Transverse colon (tissue), 4 donors: ENCODE measurements at regions of chr13 and their contacts with region 1.

Region 1: GRCh38 chr13:79775830-79776229 is 294.9 kb downstream of the NDFIP2 start:
- DNase-seq: peak; percentile 36
- H3K4me3 ChIP-seq: no peak overlapping the region
- H3K27ac ChIP-seq: peak overlapping the region in 3 of 4 donors; percentile 8 to 47 (median 24)
- H3K4me1 ChIP-seq: peaks cover 0 to 42% (median 4%) of the 10 kb centered on the region in 4 donors
- H3K27me3 ChIP-seq: no peaks in the 10 kb centered on the region
- CTCF ChIP-seq: peak; percentile 32 to 55 (median 51)
- EP300 ChIP-seq: no peak
- POLR2A ChIP-seq: no peak

Region 2: DNA sequence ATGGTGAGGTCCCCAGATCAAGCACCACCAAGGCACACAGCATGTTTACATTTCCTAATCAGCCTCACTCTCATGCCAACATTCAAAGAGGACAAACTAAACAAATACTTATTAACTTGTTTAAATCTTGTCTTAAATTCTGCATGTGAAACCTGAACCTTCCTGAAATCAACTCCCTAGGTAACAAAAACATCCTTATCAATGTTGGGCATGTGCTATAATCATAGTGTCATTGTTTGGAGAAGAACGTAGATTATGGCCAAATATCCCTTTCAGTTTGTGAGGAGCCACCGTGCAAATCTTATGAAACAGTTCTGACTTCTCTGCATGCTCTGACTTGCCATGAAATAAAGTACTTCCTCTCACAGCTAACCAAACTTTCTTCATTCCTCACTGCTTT is 171.1 kb before region 1 on chr13:
- in situ Hi-C with region 1: no loop called
- intact Hi-C with region 1: no loop called
- DNase-seq: no peak
- H3K4me3 ChIP-seq: no peak overlapping the region
- H3K27ac ChIP-seq: no peak overlapping the region
- H3K4me1 ChIP-seq: no peaks in the 10 kb centered on the region
- H3K27me3 ChIP-seq: no peaks in the 10 kb centered on the region
- CTCF ChIP-seq: no peak
- EP300 ChIP-seq: no peak
- POLR2A ChIP-seq: no peak

Region 3: GRCh38 chr13:79749984-79750551 is 25.8 kb before region 1 on chr13:
- in situ Hi-C with region 1: no loop called
- intact Hi-C with region 1: no loop called
- DNase-seq: peak; percentile 34
- H3K4me3 ChIP-seq: no peak overlapping the region
- H3K27ac ChIP-seq: peak overlapping the region in 3 of 4 donors; percentile 4 to 46 (median 19)
- H3K4me1 ChIP-seq: peaks cover 0 to 5% (median 0%) of the 10 kb centered on the region in 4 donors
- H3K27me3 ChIP-seq: no peaks in the 10 kb centered on the region
- CTCF ChIP-seq: no peak
- EP300 ChIP-seq: no peak
- POLR2A ChIP-seq: no peak

Region 4: DNA sequence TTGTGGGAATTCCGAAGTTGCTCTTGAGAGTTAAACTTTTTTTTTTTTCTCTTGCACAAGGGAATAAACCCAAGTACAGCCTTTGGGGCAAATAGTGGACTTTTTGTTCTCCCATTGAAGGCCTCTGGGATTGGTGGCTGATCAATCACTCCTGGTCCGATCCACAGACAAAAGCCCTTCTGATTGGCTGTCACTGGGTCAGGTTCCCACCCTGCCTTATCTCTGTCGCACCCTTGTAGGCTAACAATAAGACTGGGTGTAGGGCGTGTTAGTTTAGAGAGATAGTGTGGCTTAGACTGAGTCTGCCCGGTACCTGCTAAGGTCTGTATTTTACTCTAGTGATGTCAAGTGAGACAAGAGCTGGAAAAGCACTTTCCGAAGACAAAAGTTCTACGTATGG is 85.9 kb after region 1 on chr13:
- in situ Hi-C with region 1: no loop called
- intact Hi-C with region 1: no loop called
- DNase-seq: peak; percentile 39
- H3K4me3 ChIP-seq: no peak overlapping the region
- H3K27ac ChIP-seq: peak overlapping the region in 3 of 4 donors; percentile 1 to 61 (median 19)
- H3K4me1 ChIP-seq: peaks cover 0 to 7% (median 2%) of the 10 kb centered on the region in 4 donors
- H3K27me3 ChIP-seq: no peaks in the 10 kb centered on the region
- CTCF ChIP-seq: no peak
- EP300 ChIP-seq: no peak
- POLR2A ChIP-seq: no peak

Region 5: GRCh38 chr13:80342471-80343380 is 566.9 kb after region 1 on chr13:
- in situ Hi-C with region 1: loop called in 1 of 4 experiments (anchors 25 kb)
- intact Hi-C with region 1: no loop called
- DNase-seq: peak; percentile 87
- H3K4me3 ChIP-seq: peak overlapping the region; percentile 21 to 94 (median 70)
- H3K27ac ChIP-seq: peak overlapping the region; percentile 95 to 98 (median 96)
- H3K4me1 ChIP-seq: peaks cover 0 to 10% (median 0%) of the 10 kb centered on the region in 4 donors
- H3K27me3 ChIP-seq: no peaks in the 10 kb centered on the region
- CTCF ChIP-seq: peak; percentile 90 to 99 (median 99)
- EP300 ChIP-seq: no peak
- POLR2A ChIP-seq: peak; percentile 68